SK-N-SH (cell line): ENCODE measurements at regions of chr17 and their contacts with region 1.

Region 1: DNA sequence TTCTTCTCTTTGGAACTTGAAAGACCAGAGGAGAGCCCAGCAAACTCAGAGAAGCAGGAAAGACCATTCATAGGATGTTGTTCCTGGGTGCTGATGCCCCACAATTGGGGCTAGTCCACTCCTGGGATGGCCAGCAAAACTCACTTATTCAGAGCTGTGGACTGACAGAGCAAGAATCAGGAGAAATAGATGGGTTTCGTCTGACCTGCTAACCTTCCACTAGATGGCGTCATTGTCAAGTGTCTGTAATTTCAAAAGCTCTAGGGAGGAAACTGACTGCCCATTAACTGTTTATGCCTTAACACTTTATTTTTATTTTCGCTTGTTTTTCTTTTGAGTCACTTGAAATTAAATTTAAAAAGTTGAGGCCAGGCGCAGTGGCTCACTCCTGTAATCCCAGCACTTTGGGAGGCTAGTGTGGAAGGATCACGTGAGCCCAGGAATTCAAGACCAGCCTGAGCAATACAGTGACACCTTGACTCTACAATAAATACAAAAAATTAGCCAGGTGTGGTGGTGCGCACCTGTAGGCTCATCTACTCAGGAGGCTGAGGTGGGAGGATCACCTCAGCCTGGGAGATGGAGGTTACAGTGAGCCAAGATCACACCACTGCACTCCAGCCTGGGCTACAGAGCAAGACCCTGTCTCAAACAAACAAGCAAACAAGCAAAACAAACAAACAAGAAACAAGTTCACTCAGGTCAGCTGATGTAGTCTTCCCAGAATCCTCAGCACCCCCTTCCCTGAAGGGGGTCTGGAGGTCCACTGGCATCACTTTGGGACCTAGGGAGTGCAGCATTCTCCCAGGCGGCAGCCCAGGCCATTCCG is 28.6 kb upstream of the MILR1 start:
- DNase-seq: peak; percentile 76
- H3K4me3 ChIP-seq: no peak overlapping the region; a peak in 1 of 4 replicates
- H3K27ac ChIP-seq: no peak overlapping the region
- H3K4me1 ChIP-seq: peaks cover 0 to 8% of the 10 kb centered on the region in 2 experiments; a peak in 1 of 4 replicates
- H3K27me3 ChIP-seq: no peaks in the 10 kb centered on the region
- CTCF ChIP-seq: peak; percentile 97
- EP300 ChIP-seq: no peak
- RAD21 ChIP-seq: peak; percentile 91

Region 2: GRCh38 chr17:64145757-64146417 is 274.5 kb before region 1 on chr17:
- CTCF ChIA-PET with region 1: interaction called, 16 read pairs
- POLR2A ChIA-PET with region 1: no interaction called
- DNase-seq: peak; percentile 96
- H3K4me3 ChIP-seq: peak overlapping the region; percentile 73 to 80
- H3K27ac ChIP-seq: peak overlapping the region; percentile 65 to 97
- H3K4me1 ChIP-seq: peaks cover 11 to 28% of the 10 kb centered on the region in 2 experiments
- H3K27me3 ChIP-seq: no peaks in the 10 kb centered on the region
- CTCF ChIP-seq: no peak; the same call in 1 of the 2 replicates
- EP300 ChIP-seq: no peak
- RAD21 ChIP-seq: no peak

Region 3: GRCh38 chr17:64331946-64332493 is 88.3 kb before region 1 on chr17:
- CTCF ChIA-PET with region 1: interaction called, 36 read pairs
- POLR2A ChIA-PET with region 1: interaction called, 3 read pairs
- DNase-seq: no peak
- H3K4me3 ChIP-seq: no peak overlapping the region
- H3K27ac ChIP-seq: no peak overlapping the region
- H3K4me1 ChIP-seq: peaks cover 15 to 23% of the 10 kb centered on the region in 2 experiments; a peak in 2 of 4 replicates
- H3K27me3 ChIP-seq: no peaks in the 10 kb centered on the region
- CTCF ChIP-seq: no peak
- EP300 ChIP-seq: no peak
- RAD21 ChIP-seq: no peak

Region 4: GRCh38 chr17:64393000-64393402 is 27.4 kb before region 1 on chr17:
- CTCF ChIA-PET with region 1: interaction called, 46 read pairs
- POLR2A ChIA-PET with region 1: no interaction called
- DNase-seq: no peak
- H3K4me3 ChIP-seq: no peak overlapping the region
- H3K27ac ChIP-seq: no peak overlapping the region
- H3K4me1 ChIP-seq: no peaks in the 10 kb centered on the region
- H3K27me3 ChIP-seq: no peaks in the 10 kb centered on the region
- CTCF ChIP-seq: no peak
- EP300 ChIP-seq: no peak
- RAD21 ChIP-seq: no peak

Region 5: DNA sequence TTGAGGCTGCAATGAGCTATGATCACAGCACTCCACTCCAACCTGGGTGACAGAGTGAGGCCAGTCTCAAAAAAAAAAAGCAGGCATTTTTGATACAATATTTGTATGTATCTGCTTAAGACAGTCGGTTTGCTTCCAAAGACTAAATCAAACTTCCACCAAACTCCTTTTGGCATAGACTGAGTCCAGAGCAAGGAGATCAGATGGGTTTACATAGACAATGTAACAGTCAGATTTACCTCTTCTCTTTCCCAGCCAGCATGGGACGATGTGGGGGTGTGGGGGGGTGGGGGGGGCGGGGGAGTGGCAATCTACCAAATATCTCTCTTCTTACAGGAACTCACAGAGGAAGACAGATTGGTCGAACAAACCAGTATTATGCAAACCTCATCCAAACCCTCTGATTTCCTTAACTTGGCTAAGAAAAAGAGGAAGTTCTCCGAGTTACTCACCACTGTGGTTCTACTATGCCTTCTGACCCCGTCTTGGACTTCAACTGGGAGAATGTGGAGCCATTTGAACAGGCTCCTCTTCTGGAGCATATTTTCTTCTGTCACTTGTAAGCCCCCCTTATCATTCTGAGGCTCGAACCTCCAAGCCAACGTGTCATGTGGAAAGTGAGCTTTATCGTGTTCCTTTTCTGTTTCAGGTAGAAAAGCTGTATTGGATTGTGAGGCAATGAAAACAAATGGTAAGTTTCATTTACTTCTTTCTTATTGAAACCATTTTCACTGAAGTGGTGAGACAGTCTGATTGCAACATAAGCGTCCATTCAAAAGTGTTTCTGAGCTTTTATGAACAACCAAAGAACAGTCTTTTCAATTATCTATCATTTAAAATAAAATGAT is 28.5 kb after region 1 on chr17 and contains the start of gene MILR1:
- CTCF ChIA-PET with region 1: interaction called, 24 read pairs
- POLR2A ChIA-PET with region 1: interaction called, 4 read pairs
- DNase-seq: no peak
- H3K4me3 ChIP-seq: no peak within 1 kb of the TSS
- H3K27ac ChIP-seq: peak within 1 kb of the TSS in 1 of 2 experiments; percentile 57; a peak in 2 of 4 replicates
- H3K4me1 ChIP-seq: no peaks in the 10 kb centered on the region
- H3K27me3 ChIP-seq: no peaks in the 10 kb centered on the region
- CTCF ChIP-seq: no peak
- EP300 ChIP-seq: no peak
- RAD21 ChIP-seq: no peak
- polyA plus RNA-seq, gene MILR1: 4.9 and 6.0 TPM in 2 replicates

Region 6: GRCh38 chr17:64515419-64515818 is 95.1 kb after region 1 on chr17:
- CTCF ChIA-PET with region 1: interaction called, 10 read pairs
- POLR2A ChIA-PET with region 1: no interaction called
- DNase-seq: no peak
- H3K4me3 ChIP-seq: no peak overlapping the region
- H3K27ac ChIP-seq: no peak overlapping the region
- H3K4me1 ChIP-seq: no peaks in the 10 kb centered on the region; a peak in 1 of 4 replicates
- H3K27me3 ChIP-seq: no peaks in the 10 kb centered on the region
- CTCF ChIP-seq: no peak
- EP300 ChIP-seq: no peak
- RAD21 ChIP-seq: no peak